Left colon (tissue), 2 donors: ENCODE measurements at regions of chr5 and their contacts with region 1.

Region 1: GRCh38 chr5:66306105-66306843 is 162.2 kb downstream of the SREK1 start:
- DNase-seq: peak; percentile 29 to 30
- ATAC-seq: peak; percentile 87

Region 2: GRCh38 chr5:66171349-66172344 is 134.6 kb before region 1 on chr5:
- intact Hi-C with region 1: loop called in 1 of 2 experiments (anchors 5 kb)
- DNase-seq: peak in 1 of 2 donors; percentile 28
- ATAC-seq: peak; percentile 42

Region 3: DNA sequence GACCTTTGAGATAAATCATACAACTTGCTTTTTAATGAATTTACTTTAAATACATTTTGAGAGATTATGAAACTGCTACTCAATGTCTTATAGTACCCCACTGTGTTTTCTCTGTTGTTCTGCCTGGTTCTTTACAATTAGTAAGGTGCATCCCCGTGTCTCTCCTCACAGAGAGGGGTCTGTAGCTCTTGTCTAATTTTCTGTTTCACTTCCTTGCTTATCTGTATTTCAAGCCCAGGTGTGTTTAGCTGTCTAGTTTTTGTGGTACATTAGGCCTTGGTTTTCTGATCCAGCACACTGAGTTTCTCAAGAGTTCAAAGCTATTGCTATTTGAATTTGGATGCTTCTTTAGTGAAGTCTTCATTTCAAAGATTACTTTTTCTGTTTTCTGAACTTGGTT is 395.0 kb after region 1 on chr5:
- intact Hi-C with region 1: no loop called
- DNase-seq: no peak
- ATAC-seq: no peak

Region 4: GRCh38 chr5:66757188-66757833 is 451.0 kb after region 1 on chr5:
- intact Hi-C with region 1: loop called in 1 of 2 experiments (anchors 5 kb)
- DNase-seq: peak in 1 of 2 donors; percentile 62
- ATAC-seq: peak; percentile 45